Naive thymus-derived CD4-positive, alpha-beta T cell (primary cell): ENCODE measurements at regions of chr12 and their contacts with region 1.

Region 1: GRCh38 chr12:70733385-70733784 is 96.2 kb upstream of the PTPRB start:
- DNase-seq: peak in 2 of 9 donors; percentile 8 to 30
- ATAC-seq: peak; percentile 57
- H3K4me3 ChIP-seq: no peak overlapping the region
- H3K4me3 Mint-ChIP-seq: no peak overlapping the region
- H3K27ac ChIP-seq: no peak overlapping the region
- H3K27ac Mint-ChIP-seq: no peak overlapping the region
- H3K4me1 ChIP-seq: no peaks in the 10 kb centered on the region
- H3K4me1 Mint-ChIP-seq: peaks cover 0 to 2% (median 0%) of the 10 kb centered on the region in 7 donors
- H3K27me3 ChIP-seq: no peaks in the 10 kb centered on the region
- H3K27me3 Mint-ChIP-seq: peaks cover 0 to 23% (median 6%) of the 10 kb centered on the region in 5 donors

Region 2: GRCh38 chr12:69900720-69901131 is 832.7 kb before region 1 on chr12:
- CTCF ChIA-PET with region 1: no interaction called
- POLR2A ChIA-PET with region 1: no interaction called
- intact Hi-C with region 1: loop called (anchors 1 kb)
- DNase-seq: peak; percentile 23 to 67 (median 50)
- ATAC-seq: peak; percentile 56
- H3K4me3 ChIP-seq: no peak overlapping the region
- H3K4me3 Mint-ChIP-seq: no peak overlapping the region
- H3K27ac ChIP-seq: no peak overlapping the region
- H3K27ac Mint-ChIP-seq: no peak overlapping the region
- H3K4me1 ChIP-seq: no peaks in the 10 kb centered on the region
- H3K4me1 Mint-ChIP-seq: peaks cover 0 to 2% (median 0%) of the 10 kb centered on the region in 7 donors
- H3K27me3 ChIP-seq: no peaks in the 10 kb centered on the region
- H3K27me3 Mint-ChIP-seq: peaks cover 0 to 4% (median 2%) of the 10 kb centered on the region in 5 donors

Region 3: DNA sequence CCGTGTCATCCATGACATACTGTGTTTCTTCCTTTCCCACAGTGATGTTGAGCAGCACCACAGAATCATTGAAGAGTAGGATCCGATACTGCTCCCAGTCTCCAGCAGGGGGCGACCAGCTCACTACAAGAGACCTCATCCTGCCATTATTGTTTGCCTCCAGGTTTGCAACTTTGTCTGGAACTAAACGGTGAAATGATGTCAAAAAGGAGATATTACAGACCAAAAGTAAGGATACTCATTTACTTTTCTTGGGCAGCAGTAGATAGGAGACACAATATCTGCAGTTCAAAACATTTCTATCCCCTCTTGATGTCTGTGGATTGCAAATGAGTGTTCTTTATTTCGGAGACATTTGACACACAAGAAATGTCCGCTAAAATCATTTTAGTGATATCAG is 143.3 kb before region 1 on chr12:
- CTCF ChIA-PET with region 1: no interaction called
- POLR2A ChIA-PET with region 1: no interaction called
- intact Hi-C with region 1: loop called (anchors 1 to 5 kb)
- DNase-seq: peak; percentile 7 to 45 (median 22)
- ATAC-seq: peak; percentile 67
- H3K4me3 ChIP-seq: no peak overlapping the region
- H3K4me3 Mint-ChIP-seq: no peak overlapping the region
- H3K27ac ChIP-seq: no peak overlapping the region
- H3K27ac Mint-ChIP-seq: no peak overlapping the region
- H3K4me1 ChIP-seq: no peaks in the 10 kb centered on the region
- H3K4me1 Mint-ChIP-seq: peaks cover 0 to 6% (median 0%) of the 10 kb centered on the region in 7 donors
- H3K27me3 ChIP-seq: peaks cover 4 to 6% of the 10 kb centered on the region in 2 donors
- H3K27me3 Mint-ChIP-seq: peaks cover 3 to 43% (median 24%) of the 10 kb centered on the region in 5 donors